ENCODE measurements at regions of chr2 and their contacts with region 1.

Region 1: GRCh38 chr2:70301344-70302194 is at the start of gene FAM136A:
- DNase-seq: peak; percentile 86 to 89 (median 86)
- H3K4me3 ChIP-seq: peak within 1 kb of the TSS; percentile 72 to 80
- H3K4me3 Mint-ChIP-seq: peak within 1 kb of the TSS; percentile 84 to 97 (median 93)
- H3K27ac ChIP-seq: peak within 1 kb of the TSS; percentile 79
- H3K27ac Mint-ChIP-seq: peak within 1 kb of the TSS; percentile 77 to 94 (median 91)
- H3K4me1 ChIP-seq: peaks cover 8% of the 10 kb centered on the region
- H3K4me1 Mint-ChIP-seq: peaks cover 15 to 26% (median 22%) of the 10 kb centered on the region in 4 donors
- H3K27me3 ChIP-seq: no peaks in the 10 kb centered on the region
- H3K27me3 Mint-ChIP-seq: no peaks in the 10 kb centered on the region
- total RNA-seq, gene FAM136A: 26.2 to 27.4 TPM

Region 2: DNA sequence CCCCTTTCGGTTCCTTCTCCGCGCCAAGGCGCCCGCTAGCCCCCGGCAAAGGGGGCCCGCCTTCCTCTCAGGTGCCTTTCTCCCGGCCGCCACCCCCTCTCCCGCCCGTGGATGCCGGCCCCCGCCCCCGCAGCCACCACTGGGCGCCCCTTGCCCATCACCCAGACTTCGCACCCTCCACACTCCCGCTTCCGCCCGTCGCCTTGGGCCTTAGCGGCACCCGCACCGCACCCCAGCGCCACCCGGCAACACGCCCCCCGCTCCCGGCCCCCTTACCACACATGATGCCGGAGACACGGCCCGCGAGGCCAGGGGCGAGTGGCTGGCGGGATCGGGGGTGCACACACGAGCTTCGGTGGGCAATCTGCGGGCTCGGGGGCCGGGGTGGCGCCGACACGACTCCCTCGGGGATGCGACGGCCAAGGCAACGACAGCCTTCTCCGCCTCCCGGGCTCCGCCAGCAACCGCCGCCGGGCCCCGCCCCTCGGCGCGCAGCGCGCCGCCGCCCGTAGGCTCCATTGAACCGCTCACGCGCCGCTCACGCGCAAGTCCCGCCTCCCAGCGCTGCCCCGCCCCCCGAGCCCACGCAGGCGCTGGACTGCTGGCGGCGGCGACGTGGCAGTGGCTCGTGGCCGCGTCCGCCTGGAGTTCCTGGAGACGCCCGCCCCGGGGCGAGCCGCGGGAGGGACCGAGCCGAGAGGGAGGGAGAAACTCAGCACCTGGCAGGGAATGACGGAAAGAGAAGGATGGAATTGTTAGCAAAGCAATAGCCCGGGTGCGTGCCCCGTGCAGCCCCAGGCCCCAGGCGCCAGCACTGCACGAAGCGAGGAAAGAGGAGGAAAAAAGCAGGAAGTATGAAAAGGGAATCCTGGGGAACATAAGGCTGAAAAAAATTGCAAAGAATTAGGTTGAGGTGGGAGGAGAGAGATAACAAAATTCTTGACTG is 914.5 kb before region 1 on chr2 and contains the start of gene GFPT1:
- CTCF ChIA-PET with region 1: no interaction called
- POLR2A ChIA-PET with region 1: no interaction called
- intact Hi-C with region 1: loop called (anchors 10 kb)
- DNase-seq: peak; percentile 87 to 91 (median 90)
- H3K4me3 ChIP-seq: peak within 1 kb of the TSS; percentile 66 to 77
- H3K4me3 Mint-ChIP-seq: peak within 1 kb of the TSS; percentile 85 to 91 (median 89)
- H3K27ac ChIP-seq: peak within 1 kb of the TSS; percentile 66
- H3K27ac Mint-ChIP-seq: peak within 1 kb of the TSS; percentile 80 to 97 (median 89)
- H3K4me1 ChIP-seq: peaks cover 38% of the 10 kb centered on the region
- H3K4me1 Mint-ChIP-seq: peaks cover 27 to 50% (median 39%) of the 10 kb centered on the region in 4 donors
- H3K27me3 ChIP-seq: no peaks in the 10 kb centered on the region
- H3K27me3 Mint-ChIP-seq: no peaks in the 10 kb centered on the region
- total RNA-seq, gene GFPT1: 23.1 to 25.8 TPM

Region 3: DNA sequence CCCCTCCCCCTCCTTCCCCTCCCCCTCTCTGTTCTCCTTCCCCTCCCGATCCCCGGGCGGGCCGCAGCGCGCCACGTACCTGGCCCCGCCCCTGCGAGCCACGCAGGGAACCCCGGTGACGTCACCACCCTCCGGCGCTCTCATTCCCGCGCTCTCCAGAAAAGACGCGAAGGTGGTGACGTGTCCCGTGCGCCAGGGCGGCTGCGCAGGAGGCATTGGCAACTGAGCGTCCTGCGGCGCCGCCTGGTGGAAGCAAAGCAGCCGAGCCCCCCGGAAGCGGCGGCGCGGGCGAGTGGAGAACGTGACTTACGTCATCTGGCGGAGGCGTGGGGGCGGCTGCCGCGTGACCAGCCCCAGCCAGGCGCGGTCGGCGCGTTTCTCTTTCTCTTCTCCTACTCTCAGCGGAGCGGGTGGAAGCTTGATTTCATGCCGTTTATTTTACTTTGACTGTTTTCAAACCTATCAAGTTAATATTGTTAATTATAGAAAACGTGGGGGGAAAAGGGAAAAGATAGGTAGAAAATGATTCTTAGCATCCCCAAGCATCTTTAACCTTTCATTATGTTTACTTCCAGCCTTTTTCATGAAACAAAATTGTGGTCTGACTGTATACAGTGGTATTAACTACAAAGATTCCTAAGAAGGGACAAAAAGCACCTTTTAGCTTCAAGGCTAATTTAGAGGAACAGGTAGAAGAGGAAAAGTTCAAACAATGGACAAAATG is 158.8 kb before region 1 on chr2:
- CTCF ChIA-PET with region 1: interaction called, 4 read pairs
- POLR2A ChIA-PET with region 1: interaction called, 14 read pairs
- intact Hi-C with region 1: no loop called
- DNase-seq: peak; percentile 99 to 100 (median 100)
- H3K4me3 ChIP-seq: peak overlapping the region in 1 of 2 donors; percentile 67
- H3K4me3 Mint-ChIP-seq: peak overlapping the region; percentile 85 to 96 (median 90)
- H3K27ac ChIP-seq: peak overlapping the region; percentile 97
- H3K27ac Mint-ChIP-seq: peak overlapping the region; percentile 97 to 100 (median 100)
- H3K4me1 ChIP-seq: peaks cover 56% of the 10 kb centered on the region
- H3K4me1 Mint-ChIP-seq: peaks cover 38 to 67% (median 52%) of the 10 kb centered on the region in 4 donors
- H3K27me3 ChIP-seq: no peaks in the 10 kb centered on the region
- H3K27me3 Mint-ChIP-seq: peaks cover 0 to 2% of the 10 kb centered on the region in 2 donors

Region 4: GRCh38 chr2:70312560-70312959 is 11.0 kb after region 1 on chr2:
- CTCF ChIA-PET with region 1: interaction called, 18 read pairs
- POLR2A ChIA-PET with region 1: no interaction called
- intact Hi-C with region 1: no loop called
- DNase-seq: no peak
- H3K4me3 ChIP-seq: no peak overlapping the region
- H3K4me3 Mint-ChIP-seq: no peak overlapping the region
- H3K27ac ChIP-seq: no peak overlapping the region
- H3K27ac Mint-ChIP-seq: no peak overlapping the region
- H3K4me1 ChIP-seq: no peaks in the 10 kb centered on the region
- H3K4me1 Mint-ChIP-seq: peaks cover 0 to 3% (median 0%) of the 10 kb centered on the region in 4 donors
- H3K27me3 ChIP-seq: no peaks in the 10 kb centered on the region
- H3K27me3 Mint-ChIP-seq: peaks cover 2 to 6% of the 10 kb centered on the region in 2 donors

Region 5: GRCh38 chr2:70647873-70648481 is 346.4 kb after region 1 on chr2:
- CTCF ChIA-PET with region 1: interaction called, 59 read pairs
- POLR2A ChIA-PET with region 1: no interaction called
- intact Hi-C with region 1: loop called (anchors 1 kb)
- DNase-seq: peak; percentile 54 to 68 (median 63)
- H3K4me3 ChIP-seq: no peak overlapping the region
- H3K4me3 Mint-ChIP-seq: no peak overlapping the region
- H3K27ac ChIP-seq: no peak overlapping the region
- H3K27ac Mint-ChIP-seq: no peak overlapping the region
- H3K4me1 ChIP-seq: no peaks in the 10 kb centered on the region
- H3K4me1 Mint-ChIP-seq: no peaks in the 10 kb centered on the region
- H3K27me3 ChIP-seq: no peaks in the 10 kb centered on the region
- H3K27me3 Mint-ChIP-seq: peaks cover 0 to 4% of the 10 kb centered on the region in 2 donors

Region 6: GRCh38 chr2:70919672-70920366 is 618.2 kb after region 1 on chr2:
- CTCF ChIA-PET with region 1: interaction called, 16 read pairs
- POLR2A ChIA-PET with region 1: no interaction called
- intact Hi-C with region 1: no loop called
- DNase-seq: peak in 4 of 5 donors; percentile 40 to 54 (median 52)
- H3K4me3 ChIP-seq: no peak overlapping the region
- H3K4me3 Mint-ChIP-seq: no peak overlapping the region
- H3K27ac ChIP-seq: no peak overlapping the region
- H3K27ac Mint-ChIP-seq: no peak overlapping the region
- H3K4me1 ChIP-seq: no peaks in the 10 kb centered on the region
- H3K4me1 Mint-ChIP-seq: no peaks in the 10 kb centered on the region
- H3K27me3 ChIP-seq: no peaks in the 10 kb centered on the region
- H3K27me3 Mint-ChIP-seq: peaks cover 15 to 22% of the 10 kb centered on the region in 2 donors